GM12878 (cell line): ENCODE measurements at regions of chr10 and their contacts with region 1.

Region 1: GRCh38 chr10:100481462-100482081 is 18.8 kb downstream of the WNT8B start:
- DNase-seq: peak; percentile 84
- ATAC-seq: peak; percentile 99
- H3K4me3 ChIP-seq: peak overlapping the region; percentile 61; the same call in 1 of the 2 replicates
- H3K27ac ChIP-seq: no peak overlapping the region
- H3K4me1 ChIP-seq: peaks cover 5% of the 10 kb centered on the region
- H3K27me3 ChIP-seq: peaks cover 0 to 6% of the 10 kb centered on the region in 2 experiments; a peak in 1 of 4 replicates
- CTCF ChIP-seq: no peak
- EP300 ChIP-seq: no peak
- POLR2A ChIP-seq: no peak
- RAD21 ChIP-seq: no peak

Region 2: DNA sequence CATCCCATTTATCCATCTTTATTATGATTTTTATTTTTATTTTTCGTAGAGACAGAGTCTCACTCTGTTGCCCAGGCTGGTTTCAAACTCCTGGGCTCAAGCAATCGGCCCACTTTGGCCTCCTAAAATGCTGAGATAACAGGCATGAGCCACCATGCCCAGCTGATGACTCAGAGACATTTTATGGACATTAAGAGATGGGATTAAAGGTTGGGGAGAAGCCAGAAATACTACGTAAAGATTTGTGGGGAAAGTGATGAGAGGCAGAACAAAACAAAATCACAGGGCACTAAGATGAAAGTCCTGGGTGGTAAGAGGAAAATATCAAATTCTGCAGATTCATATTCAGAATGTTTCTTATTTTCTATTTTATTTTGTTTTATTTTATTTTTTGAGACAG is 11.2 kb before region 1 on chr10:
- CTCF ChIA-PET with region 1: interaction called, 13 read pairs
- POLR2A ChIA-PET with region 1: no interaction called
- RAD21 ChIA-PET with region 1: no interaction called
- SMC1A ChIA-PET with region 1: interaction called, 5 read pairs
- in situ Hi-C with region 1: no loop called
- intact Hi-C with region 1: no loop called
- DNase-seq: no peak
- ATAC-seq: no peak
- H3K4me3 ChIP-seq: no peak overlapping the region
- H3K27ac ChIP-seq: no peak overlapping the region
- H3K4me1 ChIP-seq: no peaks in the 10 kb centered on the region
- H3K27me3 ChIP-seq: no peaks in the 10 kb centered on the region; a peak in 1 of 4 replicates
- CTCF ChIP-seq: no peak
- EP300 ChIP-seq: no peak
- POLR2A ChIP-seq: no peak
- RAD21 ChIP-seq: no peak

Region 3: DNA sequence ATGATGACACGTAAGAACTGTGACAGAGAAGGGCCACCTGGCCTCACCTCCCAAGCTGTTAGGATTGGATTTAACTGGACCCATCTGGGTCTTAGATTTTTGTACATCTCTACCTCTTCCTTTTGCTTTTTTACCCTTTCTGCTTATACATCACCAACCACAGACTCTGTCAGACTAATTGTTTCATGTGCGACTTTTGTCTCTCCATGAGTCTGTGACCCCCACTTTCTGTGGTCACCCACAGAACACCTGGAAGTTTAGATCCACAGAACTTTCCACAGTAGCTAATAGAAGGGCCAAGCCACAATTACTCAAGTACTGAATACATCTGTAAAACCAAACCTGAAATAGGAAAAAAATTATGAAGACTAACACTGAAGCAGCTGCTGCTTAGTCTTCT is 15.0 kb after region 1 on chr10:
- CTCF ChIA-PET with region 1: interaction called, 13 read pairs
- POLR2A ChIA-PET with region 1: no interaction called
- RAD21 ChIA-PET with region 1: no interaction called
- SMC1A ChIA-PET with region 1: interaction called, 4 read pairs
- in situ Hi-C with region 1: no loop called
- intact Hi-C with region 1: no loop called
- DNase-seq: no peak
- ATAC-seq: no peak
- H3K4me3 ChIP-seq: no peak overlapping the region
- H3K27ac ChIP-seq: no peak overlapping the region
- H3K4me1 ChIP-seq: no peaks in the 10 kb centered on the region
- H3K27me3 ChIP-seq: no peaks in the 10 kb centered on the region
- CTCF ChIP-seq: no peak
- EP300 ChIP-seq: no peak
- POLR2A ChIP-seq: no peak
- RAD21 ChIP-seq: no peak

Region 4: GRCh38 chr10:100529475-100530298 is 48.1 kb after region 1 on chr10 and contains the start of gene NDUFB8:
- CTCF ChIA-PET with region 1: interaction called, 11 read pairs
- POLR2A ChIA-PET with region 1: no interaction called
- RAD21 ChIA-PET with region 1: no interaction called
- SMC1A ChIA-PET with region 1: no interaction called
- in situ Hi-C with region 1: no loop called
- intact Hi-C with region 1: no loop called
- DNase-seq: peak; percentile 53
- ATAC-seq: peak; percentile 84
- H3K4me3 ChIP-seq: peak within 1 kb of the TSS; percentile 95
- H3K27ac ChIP-seq: peak within 1 kb of the TSS; percentile 91
- H3K4me1 ChIP-seq: peaks cover 3% of the 10 kb centered on the region; the same call in 1 of the 2 replicates
- H3K27me3 ChIP-seq: no peaks in the 10 kb centered on the region
- CTCF ChIP-seq: no peak
- EP300 ChIP-seq: no peak
- POLR2A ChIP-seq: peak; percentile 91
- RAD21 ChIP-seq: no peak
- polyA plus RNA-seq, gene NDUFB8: 475 to 572 TPM

Region 5: GRCh38 chr10:101367569-101368453 is 886.2 kb after region 1 on chr10:
- CTCF ChIA-PET with region 1: no interaction called
- POLR2A ChIA-PET with region 1: no interaction called
- RAD21 ChIA-PET with region 1: no interaction called
- SMC1A ChIA-PET with region 1: no interaction called
- in situ Hi-C with region 1: no loop called
- intact Hi-C with region 1: no loop called
- DNase-seq: no peak
- ATAC-seq: no peak
- H3K4me3 ChIP-seq: no peak overlapping the region
- H3K27ac ChIP-seq: no peak overlapping the region
- H3K4me1 ChIP-seq: no peaks in the 10 kb centered on the region
- H3K27me3 ChIP-seq: no peaks in the 10 kb centered on the region
- CTCF ChIP-seq: no peak
- EP300 ChIP-seq: no peak
- POLR2A ChIP-seq: no peak
- RAD21 ChIP-seq: no peak